ENCODE measurements at regions of chr14 and their contacts with region 1.

Region 1: GRCh38 chr14:90827916-90828610 is 11.8 kb upstream of the TTC7B start:
- DNase-seq: peak; percentile 92 to 96
- H3K4me3 ChIP-seq: peak overlapping the region; percentile 43 to 55
- H3K27ac ChIP-seq: peak overlapping the region; percentile 71 to 75
- H3K4me1 ChIP-seq: peaks cover 0 to 16% (median 7%) of the 10 kb centered on the region in 4 donors
- H3K27me3 ChIP-seq: no peaks in the 10 kb centered on the region
- CTCF ChIP-seq: no peak

Region 2: DNA sequence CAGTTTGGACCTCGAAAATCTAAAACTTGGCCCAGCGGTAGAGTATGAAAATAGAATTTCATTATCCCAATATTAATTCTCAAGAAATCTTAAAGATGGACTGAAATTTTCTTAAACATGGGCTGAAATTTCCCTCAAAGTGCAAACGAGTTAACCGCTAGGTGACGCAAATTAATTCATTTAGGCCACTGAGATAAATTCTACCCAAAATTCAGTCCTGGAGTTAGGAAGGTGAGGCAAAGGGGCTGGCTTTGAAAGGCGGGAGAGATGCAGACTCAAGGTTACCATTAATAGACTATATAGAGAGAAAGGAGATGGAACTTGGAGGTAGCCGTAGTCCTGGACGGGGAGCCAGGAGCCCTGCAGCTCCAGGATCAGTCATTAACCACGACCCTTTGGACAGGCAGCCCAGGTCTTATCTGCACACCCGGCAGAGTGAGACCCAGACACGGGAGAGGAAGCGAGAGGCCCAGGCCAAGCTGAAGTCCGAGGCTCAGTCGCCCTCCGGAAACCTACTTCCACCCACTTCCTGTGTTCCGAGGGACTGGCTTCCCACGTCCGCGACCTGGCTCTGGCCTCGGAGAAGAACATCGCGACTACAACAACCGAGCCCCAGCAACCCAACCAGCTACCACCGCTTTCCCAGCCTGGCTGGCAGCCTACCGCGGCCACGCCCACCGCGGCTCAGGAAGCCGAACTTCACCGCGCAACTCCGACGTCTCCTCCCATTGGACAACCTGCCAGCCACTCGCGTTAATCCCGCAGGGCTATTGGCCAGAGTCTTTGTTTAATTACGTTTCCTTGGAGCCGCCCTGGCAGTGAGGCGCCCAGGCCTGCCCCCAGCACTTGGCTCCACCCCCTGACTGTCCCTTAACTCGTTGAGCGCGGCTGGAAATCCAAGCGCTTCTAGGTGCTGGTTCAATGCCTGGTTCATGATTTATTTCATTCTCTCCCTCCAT is 873.7 kb before region 1 on chr14 and contains the start of gene EFCAB11:
- intact Hi-C with region 1: loop called (anchors 10 kb)
- DNase-seq: peak; percentile 96 to 98
- H3K4me3 ChIP-seq: peak within 1 kb of the TSS; percentile 91 to 93
- H3K27ac ChIP-seq: peak within 1 kb of the TSS; percentile 93 to 97
- H3K4me1 ChIP-seq: peaks cover 0 to 23% (median 15%) of the 10 kb centered on the region in 4 donors
- H3K27me3 ChIP-seq: no peaks in the 10 kb centered on the region
- CTCF ChIP-seq: no peak